ENCODE measurements at regions of chr3 and their contacts with region 1.

Region 1: GRCh38 chr3:112020674-112021085 is 13.9 kb upstream of the TMPRSS7 start:
- DNase-seq: no peak
- ATAC-seq: no peak
- H3K4me3 ChIP-seq: no peak overlapping the region
- H3K27ac ChIP-seq: no peak overlapping the region
- H3K4me1 ChIP-seq: no peaks in the 10 kb centered on the region
- H3K27me3 ChIP-seq: no peaks in the 10 kb centered on the region
- CTCF ChIP-seq: no peak
- POLR2A ChIP-seq: no peak

Region 2: DNA sequence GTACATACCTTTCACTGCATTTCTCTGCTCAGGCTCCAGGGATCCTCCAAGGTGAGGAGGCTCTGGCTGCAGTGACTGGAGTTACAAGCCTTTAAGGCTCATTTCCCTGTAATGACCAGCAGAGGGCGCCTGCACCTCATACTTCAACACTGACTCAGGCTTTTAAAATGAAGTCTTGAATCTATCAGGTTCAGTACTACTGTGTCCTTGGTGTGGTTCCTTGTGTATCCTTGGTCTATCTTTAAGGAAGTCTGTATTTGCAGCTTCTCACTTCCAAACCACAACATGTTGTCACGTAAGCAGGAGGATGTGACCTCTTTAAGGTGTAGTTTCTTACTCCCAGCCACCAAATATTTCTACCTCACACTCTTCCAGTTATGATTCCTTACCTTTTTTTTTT is 303.1 kb before region 1 on chr3:
- intact Hi-C with region 1: loop called in 1 of 10 experiments (anchors 2 kb)
- DNase-seq: peak in 4 of 5 donors; percentile 71 to 79 (median 75)
- ATAC-seq: peak; percentile 71 to 90 (median 90)
- H3K4me3 ChIP-seq: no peak overlapping the region
- H3K27ac ChIP-seq: peak overlapping the region in 7 of 12 donors; percentile 8 to 49 (median 28)
- H3K4me1 ChIP-seq: peaks cover 0 to 29% (median 11%) of the 10 kb centered on the region in 12 donors
- H3K27me3 ChIP-seq: no peaks in the 10 kb centered on the region
- CTCF ChIP-seq: peak; percentile 91 to 99 (median 95)
- POLR2A ChIP-seq: no peak

Measured in heart left ventricle (tissue), 16 donors.